Right ventricle myocardium inferior (tissue), 1 donor: ENCODE measurements at regions of chr21 and their contacts with region 1.

Region 1: GRCh38 chr21:19256934-19257660 is 853.5 kb upstream of the TMPRSS15 start:
- DNase-seq: peak; percentile 57
- ATAC-seq: peak; percentile 93

Region 2: DNA sequence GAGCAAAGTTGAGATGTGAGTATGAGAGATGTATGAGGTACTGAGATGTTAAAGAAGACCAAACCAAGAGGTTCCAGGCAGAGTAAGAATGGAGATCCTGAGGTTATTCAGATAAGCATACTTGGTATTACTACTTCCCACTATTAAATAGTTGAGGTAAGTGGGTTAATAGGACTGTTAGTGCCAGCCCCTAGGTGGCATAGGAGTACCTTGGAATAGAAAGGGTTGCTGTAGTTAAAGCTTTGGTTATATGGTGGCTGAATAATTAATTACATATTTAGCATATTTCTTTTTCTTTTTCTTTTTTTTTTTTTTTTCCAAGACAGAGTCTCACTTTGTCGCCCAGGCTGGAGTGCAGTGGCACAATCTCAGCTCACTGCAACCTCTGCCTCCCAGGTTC is 455.6 kb before region 1 on chr21:
- intact Hi-C with region 1: loop called (anchors 10 kb)
- DNase-seq: no peak
- ATAC-seq: peak; percentile 54

Region 3: DNA sequence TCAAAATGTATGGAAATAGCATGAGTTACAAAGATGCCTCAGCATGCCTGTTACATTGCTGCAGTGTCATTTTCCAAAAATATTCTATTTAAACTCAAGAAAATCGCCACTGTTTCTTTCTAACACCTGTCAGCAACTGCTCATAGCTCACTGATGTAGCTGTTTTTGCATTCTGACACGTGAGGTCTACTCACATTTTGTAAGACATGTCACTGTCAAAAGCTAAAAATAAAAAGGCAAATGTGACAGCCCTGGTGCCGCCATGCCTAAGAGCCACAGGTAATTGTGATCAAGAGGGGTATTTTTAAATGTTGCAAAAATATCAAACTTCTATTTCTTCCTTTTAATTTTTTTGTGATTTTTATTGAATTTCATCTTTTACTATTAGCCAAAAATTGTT is 297.3 kb before region 1 on chr21:
- intact Hi-C with region 1: loop called (anchors 2 kb)
- DNase-seq: no peak
- ATAC-seq: no peak

Region 4: GRCh38 chr21:19011451-19011850 is 245.6 kb before region 1 on chr21:
- intact Hi-C with region 1: loop called (anchors 5 kb)
- DNase-seq: no peak
- ATAC-seq: peak; percentile 76